ENCODE measurements at regions of chr7 and their contacts with region 1.

Region 1: DNA sequence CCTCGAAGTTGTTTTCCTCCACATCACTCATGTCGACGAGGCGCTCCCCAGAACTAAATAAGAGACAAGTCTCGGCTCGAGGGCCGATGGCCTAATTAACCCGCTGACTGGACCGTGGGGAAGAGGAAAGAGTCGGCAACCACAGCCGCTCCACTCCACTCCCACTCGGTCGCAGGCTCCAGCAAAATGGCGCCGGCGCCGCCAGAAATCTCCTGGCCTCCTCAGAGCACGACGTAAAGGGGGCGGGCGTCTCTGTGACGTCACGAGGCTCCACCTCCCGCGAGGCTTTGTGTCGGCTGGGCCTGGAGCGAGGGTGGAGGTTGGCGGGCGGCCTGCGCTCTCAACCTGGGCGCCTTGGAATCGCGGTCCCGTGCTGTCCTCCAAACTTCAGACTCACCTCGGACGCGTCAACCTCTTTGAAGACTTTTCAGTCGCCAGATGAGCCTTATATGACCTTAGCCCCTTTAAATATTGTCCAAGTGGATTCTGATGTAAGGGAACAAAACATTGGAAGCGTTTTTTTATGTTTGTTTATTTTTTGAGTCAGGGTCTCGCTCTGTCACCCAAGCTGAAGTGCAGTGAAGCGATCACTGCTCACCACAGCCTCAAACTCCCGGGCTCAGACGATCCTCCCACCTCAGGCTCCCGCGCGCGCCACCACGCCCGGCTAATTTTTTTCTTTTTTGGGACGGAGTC is at the start of gene TRA2A:
- DNase-seq: peak; percentile 93 to 97 (median 95)
- ATAC-seq: peak; percentile 96
- H3K4me3 ChIP-seq: peak within 1 kb of the TSS; percentile 80
- H3K4me3 Mint-ChIP-seq: peak within 1 kb of the TSS; percentile 89 to 100 (median 99)
- H3K27ac ChIP-seq: peak within 1 kb of the TSS; percentile 93
- H3K27ac Mint-ChIP-seq: peak within 1 kb of the TSS; percentile 98 to 100 (median 100)
- H3K4me1 ChIP-seq: peaks cover 30 to 31% of the 10 kb centered on the region in 2 donors
- H3K4me1 Mint-ChIP-seq: peaks cover 28 to 51% (median 46%) of the 10 kb centered on the region in 7 donors
- H3K27me3 ChIP-seq: no peaks in the 10 kb centered on the region
- H3K27me3 Mint-ChIP-seq: no peaks in the 10 kb centered on the region
- total RNA-seq, gene TRA2A: 131 to 263 (median 163) TPM

Region 2: DNA sequence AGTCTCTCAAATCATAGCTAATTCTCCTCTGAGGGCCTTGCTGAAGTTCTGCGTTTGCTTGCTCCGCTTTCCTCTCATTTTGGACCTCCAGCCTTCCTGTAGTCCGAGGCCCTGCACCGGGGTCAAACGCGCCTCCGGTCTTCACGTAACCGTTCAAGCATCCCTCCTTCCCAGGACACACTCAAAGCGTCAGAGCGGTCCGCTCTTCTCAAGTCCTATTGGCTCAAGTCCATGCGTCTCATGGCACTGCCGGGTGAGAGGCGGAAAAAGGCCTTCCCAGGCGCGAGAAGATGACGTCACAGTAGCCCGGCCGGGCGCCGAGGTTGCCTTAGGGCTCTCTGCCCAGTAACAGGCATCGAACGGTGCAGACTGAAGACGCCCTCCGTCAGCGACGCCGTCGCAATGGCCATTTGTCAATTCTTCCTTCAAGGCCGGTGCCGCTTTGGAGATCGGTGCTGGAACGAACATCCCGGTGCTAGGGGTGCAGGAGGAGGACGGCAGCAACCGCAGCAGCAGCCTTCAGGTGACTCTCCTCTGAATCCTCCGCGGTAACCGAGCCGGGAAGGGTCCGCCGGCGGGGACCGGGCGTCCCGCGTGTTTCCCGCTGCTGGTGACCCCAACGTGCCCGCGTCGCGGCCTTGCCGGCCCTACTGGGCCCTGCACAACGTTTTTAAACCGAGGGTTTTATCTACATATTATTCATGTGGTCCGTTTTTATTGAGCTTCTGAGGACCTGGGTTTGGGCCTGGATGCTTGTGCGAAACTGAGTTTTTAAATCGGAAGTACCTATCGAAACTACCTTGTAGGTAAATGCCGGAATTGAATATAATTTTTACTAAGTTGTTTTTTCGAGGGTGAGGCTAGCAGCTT is 350.0 kb before region 1 on chr7 and contains the start of gene NUP42:
- CTCF ChIA-PET with region 1: no interaction called
- POLR2A ChIA-PET with region 1: no interaction called
- intact Hi-C with region 1: loop called (anchors 1 to 2 kb)
- DNase-seq: peak; percentile 87 to 95 (median 93)
- ATAC-seq: peak; percentile 97
- H3K4me3 ChIP-seq: peak within 1 kb of the TSS; percentile 86
- H3K4me3 Mint-ChIP-seq: peak within 1 kb of the TSS; percentile 95 to 100 (median 98)
- H3K27ac ChIP-seq: peak within 1 kb of the TSS; percentile 85
- H3K27ac Mint-ChIP-seq: peak within 1 kb of the TSS; percentile 97 to 99 (median 98)
- H3K4me1 ChIP-seq: peaks cover 16 to 17% of the 10 kb centered on the region in 2 donors
- H3K4me1 Mint-ChIP-seq: peaks cover 20 to 50% (median 43%) of the 10 kb centered on the region in 7 donors
- H3K27me3 ChIP-seq: no peaks in the 10 kb centered on the region
- H3K27me3 Mint-ChIP-seq: peaks cover 0 to 16% (median 0%) of the 10 kb centered on the region in 5 donors
- total RNA-seq, gene NUP42: 19.8 to 37.7 (median 27.5) TPM

Region 3: DNA sequence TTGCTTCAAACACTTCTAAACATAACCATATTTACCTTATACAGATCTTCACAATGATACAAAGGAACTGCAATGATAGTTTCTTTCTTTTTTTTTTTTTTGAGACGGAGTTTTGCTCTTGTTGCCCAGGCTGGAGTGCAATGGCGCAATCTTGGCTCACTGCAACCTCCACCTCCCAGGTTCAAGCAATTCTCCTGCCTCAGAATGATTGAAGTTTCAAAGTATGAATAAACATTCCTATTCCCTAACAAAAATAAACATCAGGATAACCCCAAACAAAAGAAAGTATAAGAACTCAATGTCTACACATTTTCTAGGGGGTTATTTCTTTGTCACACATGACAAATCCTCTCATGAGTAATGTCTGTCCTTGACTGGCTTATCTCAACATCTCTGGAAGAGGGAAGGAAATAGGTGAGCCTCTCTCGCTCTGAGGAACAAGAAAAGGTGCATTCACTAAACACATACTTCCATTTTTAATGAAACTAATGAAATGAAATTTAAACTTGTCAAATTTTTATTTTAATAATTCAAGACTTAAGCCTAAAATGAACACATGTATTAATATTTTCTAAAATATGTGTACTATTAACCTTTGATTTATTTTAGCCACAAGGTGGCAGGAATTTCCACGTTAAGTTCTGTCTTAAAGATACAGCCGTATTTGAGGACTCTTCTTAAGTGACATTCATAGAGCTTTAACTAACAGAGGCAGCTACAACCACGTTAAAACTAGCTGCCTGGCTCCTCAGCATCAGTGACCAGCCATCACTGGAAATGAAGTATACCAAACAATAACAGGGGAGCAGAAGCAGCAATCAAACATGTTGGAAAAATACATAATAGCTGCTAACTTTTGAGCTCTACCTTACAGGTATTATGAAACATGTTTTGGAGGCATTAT is 174.5 kb before region 1 on chr7:
- CTCF ChIA-PET with region 1: no interaction called
- POLR2A ChIA-PET with region 1: interaction called, 3 read pairs
- intact Hi-C with region 1: loop called in 1 of 2 experiments (anchors 5 kb)
- DNase-seq: peak in 4 of 9 donors; percentile 17 to 37 (median 22)
- ATAC-seq: peak; percentile 55
- H3K4me3 ChIP-seq: no peak overlapping the region
- H3K4me3 Mint-ChIP-seq: peak overlapping the region in 2 of 10 donors; percentile 3 to 51
- H3K27ac ChIP-seq: no peak overlapping the region
- H3K27ac Mint-ChIP-seq: no peak overlapping the region
- H3K4me1 ChIP-seq: peaks cover 5 to 6% of the 10 kb centered on the region in 2 donors
- H3K4me1 Mint-ChIP-seq: peaks cover 5 to 19% (median 14%) of the 10 kb centered on the region in 7 donors
- H3K27me3 ChIP-seq: no peaks in the 10 kb centered on the region
- H3K27me3 Mint-ChIP-seq: peaks cover 0 to 47% (median 12%) of the 10 kb centered on the region in 5 donors

Region 4: GRCh38 chr7:23514755-23515154 is 17.2 kb before region 1 on chr7:
- CTCF ChIA-PET with region 1: no interaction called
- POLR2A ChIA-PET with region 1: interaction called, 4 read pairs
- intact Hi-C with region 1: loop called (anchors 2 kb)
- DNase-seq: no peak
- ATAC-seq: no peak
- H3K4me3 ChIP-seq: no peak overlapping the region
- H3K4me3 Mint-ChIP-seq: no peak overlapping the region
- H3K27ac ChIP-seq: no peak overlapping the region
- H3K27ac Mint-ChIP-seq: peak overlapping the region in 3 of 9 donors; percentile 59 to 81 (median 65)
- H3K4me1 ChIP-seq: no peaks in the 10 kb centered on the region
- H3K4me1 Mint-ChIP-seq: peaks cover 0 to 23% (median 8%) of the 10 kb centered on the region in 7 donors
- H3K27me3 ChIP-seq: no peaks in the 10 kb centered on the region
- H3K27me3 Mint-ChIP-seq: no peaks in the 10 kb centered on the region

Region 5: DNA sequence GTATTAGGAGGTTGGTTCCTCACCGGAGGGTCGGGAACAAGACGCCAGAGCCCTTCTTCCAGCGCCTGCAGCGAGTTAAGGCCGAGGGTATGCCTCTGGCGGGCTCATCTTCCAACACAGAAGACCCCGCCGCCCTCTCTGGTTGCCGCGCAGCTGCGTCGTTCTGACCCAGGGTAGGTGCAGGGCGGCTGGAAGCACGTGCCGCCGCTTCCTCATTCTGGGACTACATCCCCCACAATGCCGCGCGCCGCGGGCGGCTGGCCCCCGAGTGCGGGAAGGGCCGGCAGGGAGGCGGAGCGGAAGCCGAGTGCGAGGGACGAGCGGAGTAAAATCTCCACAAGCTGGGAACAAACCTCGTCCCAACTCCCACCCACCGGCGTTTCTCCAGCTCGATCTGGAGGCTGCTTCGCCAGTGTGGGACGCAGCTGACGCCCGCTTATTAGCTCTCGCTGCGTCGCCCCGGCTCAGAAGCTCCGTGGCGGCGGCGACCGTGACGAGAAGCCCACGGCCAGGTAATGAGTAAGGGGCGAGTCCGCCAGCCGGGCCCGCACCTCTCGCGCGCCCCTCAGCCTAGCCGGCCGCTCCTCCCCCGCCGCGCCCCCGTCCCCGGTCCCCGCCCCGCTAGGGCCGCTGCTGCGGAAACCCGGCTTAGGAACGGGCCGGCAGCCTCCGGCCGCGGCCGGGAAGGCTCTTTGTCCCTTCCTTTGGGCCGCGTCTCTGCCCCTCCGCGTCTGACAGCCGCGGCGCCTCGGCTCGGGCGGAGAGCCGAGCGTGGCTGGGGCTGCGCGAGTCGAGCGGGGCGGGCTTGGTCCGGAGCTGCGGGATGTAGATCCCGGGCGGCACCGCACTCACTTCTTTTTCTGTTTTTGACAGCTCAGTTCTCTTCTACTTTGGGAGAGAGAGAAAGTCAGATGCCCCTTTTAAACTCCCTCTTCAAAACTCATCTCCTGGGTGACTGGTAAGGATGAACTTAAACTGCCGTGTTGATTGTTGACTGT is 65.5 kb after region 1 on chr7 and contains the start of gene CCDC126:
- CTCF ChIA-PET with region 1: no interaction called
- POLR2A ChIA-PET with region 1: no interaction called
- intact Hi-C with region 1: loop called (anchors 1 to 5 kb)
- DNase-seq: peak; percentile 64 to 83 (median 76)
- ATAC-seq: peak; percentile 98
- H3K4me3 ChIP-seq: peak within 1 kb of the TSS; percentile 93
- H3K4me3 Mint-ChIP-seq: peak within 1 kb of the TSS; percentile 86 to 98 (median 94)
- H3K27ac ChIP-seq: peak within 1 kb of the TSS; percentile 74
- H3K27ac Mint-ChIP-seq: peak within 1 kb of the TSS; percentile 59 to 86 (median 80)
- H3K4me1 ChIP-seq: peaks cover 9 to 13% of the 10 kb centered on the region in 2 donors
- H3K4me1 Mint-ChIP-seq: peaks cover 34 to 52% (median 39%) of the 10 kb centered on the region in 7 donors
- H3K27me3 ChIP-seq: no peaks in the 10 kb centered on the region
- H3K27me3 Mint-ChIP-seq: peaks cover 0 to 7% (median 4%) of the 10 kb centered on the region in 5 donors
- total RNA-seq, gene CCDC126: 7.0 to 24.7 (median 17.1) TPM

Region 6: GRCh38 chr7:23607866-23608265 is 75.9 kb after region 1 on chr7:
- CTCF ChIA-PET with region 1: no interaction called
- POLR2A ChIA-PET with region 1: no interaction called
- intact Hi-C with region 1: no loop called
- DNase-seq: no peak
- ATAC-seq: no peak
- H3K4me3 ChIP-seq: no peak overlapping the region
- H3K4me3 Mint-ChIP-seq: no peak overlapping the region
- H3K27ac ChIP-seq: no peak overlapping the region
- H3K27ac Mint-ChIP-seq: no peak overlapping the region
- H3K4me1 ChIP-seq: no peaks in the 10 kb centered on the region
- H3K4me1 Mint-ChIP-seq: peaks cover 0 to 15% (median 8%) of the 10 kb centered on the region in 7 donors
- H3K27me3 ChIP-seq: no peaks in the 10 kb centered on the region
- H3K27me3 Mint-ChIP-seq: no peaks in the 10 kb centered on the region

Region 7: DNA sequence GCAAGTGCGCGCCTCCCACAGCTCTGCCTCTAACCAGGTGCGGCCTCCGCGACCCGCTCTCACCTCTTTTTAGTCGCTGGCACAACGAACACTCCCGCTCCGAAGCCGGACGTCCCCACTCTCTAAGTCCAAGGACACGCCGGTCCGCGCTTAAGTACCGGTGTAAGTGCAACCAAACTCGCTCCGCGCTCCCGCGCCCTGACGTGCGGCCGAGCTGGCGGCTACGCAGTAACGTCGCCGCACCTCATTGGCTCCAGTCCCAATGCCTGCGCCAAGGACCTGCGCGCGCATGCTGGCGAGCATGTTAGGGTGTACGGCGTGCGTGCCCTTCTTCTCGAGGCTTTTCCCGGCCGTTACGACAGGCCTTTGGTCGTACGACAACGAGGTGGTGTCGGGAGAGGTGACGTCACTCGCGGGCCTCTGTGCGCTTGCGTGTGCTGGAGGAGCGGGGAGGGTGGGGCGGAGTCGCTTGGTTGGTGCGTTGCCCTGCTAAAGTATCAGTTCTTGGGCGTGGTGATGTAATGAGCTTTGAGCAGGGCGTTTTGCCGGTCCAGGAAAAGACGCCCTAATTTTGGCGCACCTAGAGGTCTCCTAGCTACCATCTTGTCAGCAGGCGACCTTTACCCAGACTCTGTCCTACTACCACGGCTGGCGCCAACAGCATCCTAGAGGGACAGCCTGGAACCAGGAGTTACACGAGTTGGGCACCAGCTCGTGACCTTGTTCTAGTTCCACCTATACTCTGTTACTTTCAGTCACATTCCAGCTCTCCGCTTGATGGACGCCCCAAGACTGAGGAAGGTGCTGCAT is 1593.4 kb after region 1 on chr7 and contains the start of gene CYCS:
- CTCF ChIA-PET with region 1: no interaction called
- POLR2A ChIA-PET with region 1: no interaction called
- intact Hi-C with region 1: loop called (anchors 1 to 2 kb)
- DNase-seq: peak; percentile 97 to 100 (median 99)
- ATAC-seq: peak; percentile 96
- H3K4me3 ChIP-seq: peak within 1 kb of the TSS; percentile 74
- H3K4me3 Mint-ChIP-seq: peak within 1 kb of the TSS; percentile 88 to 100 (median 100)
- H3K27ac ChIP-seq: peak within 1 kb of the TSS; percentile 93
- H3K27ac Mint-ChIP-seq: peak within 1 kb of the TSS; percentile 98 to 100 (median 100)
- H3K4me1 ChIP-seq: peaks cover 7 to 13% of the 10 kb centered on the region in 2 donors
- H3K4me1 Mint-ChIP-seq: peaks cover 15 to 40% (median 23%) of the 10 kb centered on the region in 7 donors
- H3K27me3 ChIP-seq: no peaks in the 10 kb centered on the region
- H3K27me3 Mint-ChIP-seq: peaks cover 0 to 5% (median 0%) of the 10 kb centered on the region in 5 donors
- total RNA-seq, gene CYCS: 40.4 to 130 (median 114) TPM